ENCODE measurements at regions of chr9 and their contacts with region 1.

Region 1: GRCh38 chr9:33264473-33265177 is at the starts of genes BAG1 and CHMP5:
- DNase-seq: peak; percentile 100
- H3K4me3 Mint-ChIP-seq: peak within 1 kb of the TSS; percentile 91
- H3K27ac Mint-ChIP-seq: peak within 1 kb of the TSS; percentile 94
- H3K4me1 Mint-ChIP-seq: peaks cover 42% of the 10 kb centered on the region
- H3K27me3 Mint-ChIP-seq: no peaks in the 10 kb centered on the region
- total RNA-seq, gene BAG1: 52.7 to 56.6 TPM
- total RNA-seq, gene CHMP5: 116 to 119 TPM

Region 2: DNA sequence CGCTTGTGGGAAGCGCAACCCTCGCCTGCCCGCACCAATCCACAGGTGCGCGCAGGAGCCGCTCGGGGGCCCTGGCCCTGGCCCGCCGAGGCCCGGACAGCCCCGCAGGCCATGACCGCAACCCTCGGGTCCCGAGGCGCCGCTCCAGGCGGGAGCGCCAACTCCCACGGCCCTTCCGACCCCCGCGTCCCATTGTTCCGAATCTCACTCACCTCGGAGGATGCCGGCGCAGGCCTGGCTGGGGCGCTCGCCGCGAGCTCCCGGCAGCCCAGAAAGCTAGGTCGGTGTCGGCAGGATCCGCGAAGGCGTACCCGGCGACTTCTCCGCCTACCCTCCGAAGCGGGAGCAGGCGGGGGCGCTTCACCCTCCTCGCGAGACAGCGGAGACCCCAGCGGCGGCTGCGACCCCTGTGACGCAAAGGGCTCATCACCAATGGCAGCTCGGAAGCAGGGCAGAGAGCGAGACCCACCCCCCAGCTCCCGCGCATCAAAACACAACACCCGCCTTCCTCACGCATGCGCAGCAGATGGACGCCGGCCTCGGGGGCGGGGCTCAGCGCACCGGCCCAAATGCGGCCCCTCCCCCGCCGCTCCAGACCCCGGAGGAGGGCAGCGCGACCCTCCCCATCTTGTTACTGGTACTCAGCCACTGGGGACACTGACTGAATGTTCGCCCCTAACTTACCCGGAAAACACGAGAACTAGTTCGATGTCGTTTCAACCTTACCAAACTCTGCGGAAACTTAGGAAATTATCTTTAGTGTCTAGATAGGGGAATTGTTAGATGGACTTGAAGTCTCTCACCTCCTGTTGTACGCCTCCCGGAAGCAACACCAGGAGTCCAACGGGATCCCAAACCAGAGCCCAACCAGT is 713.8 kb before region 1 on chr9:
- CTCF ChIA-PET with region 1: no interaction called
- POLR2A ChIA-PET with region 1: no interaction called
- intact Hi-C with region 1: loop called (anchors 10 kb)
- DNase-seq: peak; percentile 95
- H3K4me3 Mint-ChIP-seq: peak overlapping the region; percentile 99
- H3K27ac Mint-ChIP-seq: peak overlapping the region; percentile 100
- H3K4me1 Mint-ChIP-seq: peaks cover 48% of the 10 kb centered on the region
- H3K27me3 Mint-ChIP-seq: no peaks in the 10 kb centered on the region

Region 3: DNA sequence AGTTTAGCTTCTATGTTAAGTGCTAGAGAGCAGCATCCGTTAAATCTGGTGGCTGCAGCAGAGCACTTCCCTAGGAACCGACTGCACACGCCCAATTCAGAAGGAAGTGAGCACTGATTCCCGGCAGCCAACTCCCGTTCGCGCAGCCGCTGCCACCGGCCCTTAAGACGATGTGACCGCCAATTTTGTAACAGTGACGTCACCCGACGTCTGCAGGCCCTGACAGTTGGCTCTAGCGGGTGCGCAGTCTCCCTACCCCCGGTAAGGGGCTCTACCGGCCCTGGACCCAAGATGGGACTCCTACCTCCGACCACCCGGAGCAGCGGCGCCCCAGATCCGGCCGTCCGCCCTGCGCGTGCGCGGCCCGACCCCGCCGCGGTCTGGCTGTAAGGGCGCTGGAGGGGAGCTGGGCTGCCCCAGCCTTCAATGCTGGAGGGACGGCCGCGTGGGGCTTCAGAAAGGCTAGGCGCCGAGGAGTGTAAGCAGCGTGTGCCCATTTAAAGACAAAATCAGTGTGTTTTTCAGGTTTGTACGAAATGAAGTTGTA is 220.4 kb before region 1 on chr9:
- CTCF ChIA-PET with region 1: no interaction called
- POLR2A ChIA-PET with region 1: no interaction called
- intact Hi-C with region 1: loop called (anchors 1 kb)
- DNase-seq: peak; percentile 81
- H3K4me3 Mint-ChIP-seq: peak overlapping the region; percentile 73
- H3K27ac Mint-ChIP-seq: peak overlapping the region; percentile 63
- H3K4me1 Mint-ChIP-seq: peaks cover 15% of the 10 kb centered on the region
- H3K27me3 Mint-ChIP-seq: no peaks in the 10 kb centered on the region

Region 4: DNA sequence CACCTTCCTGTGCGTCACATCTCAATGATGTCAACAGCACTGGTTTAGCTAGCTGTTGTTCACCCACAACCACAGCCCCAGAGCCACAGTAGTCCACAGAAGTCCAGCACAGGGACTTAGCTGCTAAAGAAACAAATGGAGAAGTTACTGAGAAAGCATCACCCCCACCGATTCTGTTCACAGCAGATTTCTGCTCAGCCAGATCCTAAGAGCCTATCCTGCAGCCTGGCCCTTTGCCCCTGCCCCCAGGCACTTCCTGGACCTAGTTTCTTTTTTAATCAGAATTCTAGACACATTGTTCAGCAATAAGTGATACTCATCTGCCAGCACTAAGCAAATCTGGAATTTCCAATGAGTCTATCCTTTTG is 104.9 kb before region 1 on chr9:
- CTCF ChIA-PET with region 1: no interaction called
- POLR2A ChIA-PET with region 1: no interaction called
- intact Hi-C with region 1: loop called (anchors 2 kb)
- DNase-seq: peak; percentile 85
- H3K4me3 Mint-ChIP-seq: peak overlapping the region; percentile 66
- H3K27ac Mint-ChIP-seq: peak overlapping the region; percentile 97
- H3K4me1 Mint-ChIP-seq: peaks cover 94% of the 10 kb centered on the region
- H3K27me3 Mint-ChIP-seq: no peaks in the 10 kb centered on the region

Region 5: DNA sequence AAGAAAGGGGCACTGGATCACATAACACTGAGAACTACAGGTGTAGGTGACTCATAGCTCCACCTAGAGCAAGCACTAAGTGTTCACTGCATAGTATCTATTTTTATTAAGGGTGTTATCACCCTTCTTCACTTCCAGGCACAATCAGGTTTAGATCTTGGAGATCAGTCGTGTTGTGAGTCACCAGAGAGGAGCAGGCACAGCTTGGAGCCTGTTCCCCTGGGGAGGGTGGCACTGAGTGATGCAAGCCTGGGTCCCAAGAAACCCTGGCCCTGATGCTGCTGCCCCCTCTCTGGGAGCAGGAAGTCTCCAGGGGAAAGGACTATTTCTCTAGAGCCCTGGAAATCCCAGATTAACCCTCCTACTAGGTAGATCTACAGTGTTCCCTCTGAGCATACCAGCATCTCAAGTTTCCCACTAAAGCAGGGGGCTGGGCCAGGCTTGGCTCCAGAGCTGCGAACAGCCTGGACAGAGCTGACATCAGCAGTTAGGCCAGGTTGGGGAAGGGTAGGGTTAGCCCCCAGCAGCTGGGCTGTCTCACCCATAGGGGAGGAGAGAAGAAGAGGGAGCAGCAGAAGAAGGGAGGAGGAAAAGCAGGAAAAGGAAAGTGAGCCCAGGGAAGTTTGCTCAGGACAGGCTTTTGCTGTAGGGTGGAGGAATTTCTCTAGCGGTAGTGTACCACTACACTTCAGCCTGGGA is 52.8 kb before region 1 on chr9:
- CTCF ChIA-PET with region 1: no interaction called
- POLR2A ChIA-PET with region 1: no interaction called
- intact Hi-C with region 1: no loop called
- DNase-seq: no peak
- H3K4me3 Mint-ChIP-seq: no peak overlapping the region
- H3K27ac Mint-ChIP-seq: no peak overlapping the region
- H3K4me1 Mint-ChIP-seq: peaks cover 2% of the 10 kb centered on the region
- H3K27me3 Mint-ChIP-seq: no peaks in the 10 kb centered on the region

Region 6: GRCh38 chr9:33306037-33306436 is 41.4 kb after region 1 on chr9:
- CTCF ChIA-PET with region 1: no interaction called
- POLR2A ChIA-PET with region 1: no interaction called
- intact Hi-C with region 1: loop called (anchors 1 kb)
- DNase-seq: peak; percentile 59
- H3K4me3 Mint-ChIP-seq: no peak overlapping the region
- H3K27ac Mint-ChIP-seq: no peak overlapping the region
- H3K4me1 Mint-ChIP-seq: peaks cover 25% of the 10 kb centered on the region
- H3K27me3 Mint-ChIP-seq: no peaks in the 10 kb centered on the region

Region 7: GRCh38 chr9:33446946-33447798 is 182.5 kb after region 1 on chr9 and contains the start of gene AQP3:
- CTCF ChIA-PET with region 1: no interaction called
- POLR2A ChIA-PET with region 1: no interaction called
- intact Hi-C with region 1: loop called (anchors 2 kb)
- DNase-seq: peak; percentile 84
- H3K4me3 Mint-ChIP-seq: peak within 1 kb of the TSS; percentile 89
- H3K27ac Mint-ChIP-seq: peak within 1 kb of the TSS; percentile 94
- H3K4me1 Mint-ChIP-seq: peaks cover 50% of the 10 kb centered on the region
- H3K27me3 Mint-ChIP-seq: no peaks in the 10 kb centered on the region
- total RNA-seq, gene AQP3: 19.4 to 20.2 TPM